IMR-90 (cell line): ENCODE measurements at regions of chr9 and their contacts with region 1.

Region 1: GRCh38 chr9:33320568-33321261 is 30.4 kb downstream of the NFX1 start:
- DNase-seq: peak; percentile 98
- ATAC-seq: peak; percentile 82
- H3K4me3 ChIP-seq: no peak overlapping the region
- H3K27ac ChIP-seq: peak overlapping the region; percentile 100
- H3K4me1 ChIP-seq: peaks cover 24% of the 10 kb centered on the region
- H3K27me3 ChIP-seq: no peaks in the 10 kb centered on the region
- CTCF ChIP-seq: no peak
- POLR2A ChIP-seq: 0 out of 2 replicates have a peak, but pooled peaks have one; percentile 12
- RAD21 ChIP-seq: no peak

Region 2: GRCh38 chr9:32456564-32456963 is 864.2 kb before region 1 on chr9:
- CTCF ChIA-PET with region 1: no interaction called
- POLR2A ChIA-PET with region 1: no interaction called
- dilution Hi-C with region 1: no loop called
- in situ Hi-C with region 1: no loop called
- intact Hi-C with region 1: no loop called
- DNase-seq: no peak
- ATAC-seq: peak; percentile 47
- H3K4me3 ChIP-seq: no peak overlapping the region
- H3K27ac ChIP-seq: no peak overlapping the region
- H3K4me1 ChIP-seq: no peaks in the 10 kb centered on the region
- H3K27me3 ChIP-seq: no peaks in the 10 kb centered on the region
- CTCF ChIP-seq: no peak
- POLR2A ChIP-seq: no peak
- RAD21 ChIP-seq: no peak

Region 3: DNA sequence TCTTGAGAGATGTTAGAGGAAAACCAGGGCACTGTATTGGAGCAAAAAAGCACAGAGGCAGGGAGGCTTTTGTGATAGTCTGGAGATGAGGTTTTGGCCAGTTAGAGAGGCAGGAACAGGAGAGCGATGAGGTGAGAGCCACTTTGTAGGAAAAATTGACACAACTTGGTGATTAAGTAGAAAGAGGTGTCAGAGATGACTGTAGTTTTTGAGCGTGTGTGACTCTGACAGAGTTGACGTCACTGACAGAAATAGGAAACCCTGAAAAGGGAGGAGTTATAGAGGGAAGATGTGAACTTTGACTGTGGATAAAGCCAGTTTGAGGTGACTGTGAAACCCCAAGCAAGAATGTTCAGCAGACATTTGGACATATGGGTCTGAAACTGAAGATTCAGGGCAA is 14.7 kb before region 1 on chr9:
- CTCF ChIA-PET with region 1: interaction called, 5 read pairs
- POLR2A ChIA-PET with region 1: interaction called, 13 read pairs
- dilution Hi-C with region 1: no loop called
- in situ Hi-C with region 1: no loop called
- intact Hi-C with region 1: no loop called
- DNase-seq: peak; percentile 28
- ATAC-seq: no peak
- H3K4me3 ChIP-seq: no peak overlapping the region
- H3K27ac ChIP-seq: no peak overlapping the region
- H3K4me1 ChIP-seq: peaks cover 4% of the 10 kb centered on the region; the same call in 1 of the 2 replicates
- H3K27me3 ChIP-seq: no peaks in the 10 kb centered on the region
- CTCF ChIP-seq: no peak
- POLR2A ChIP-seq: no peak
- RAD21 ChIP-seq: no peak

Region 4: DNA sequence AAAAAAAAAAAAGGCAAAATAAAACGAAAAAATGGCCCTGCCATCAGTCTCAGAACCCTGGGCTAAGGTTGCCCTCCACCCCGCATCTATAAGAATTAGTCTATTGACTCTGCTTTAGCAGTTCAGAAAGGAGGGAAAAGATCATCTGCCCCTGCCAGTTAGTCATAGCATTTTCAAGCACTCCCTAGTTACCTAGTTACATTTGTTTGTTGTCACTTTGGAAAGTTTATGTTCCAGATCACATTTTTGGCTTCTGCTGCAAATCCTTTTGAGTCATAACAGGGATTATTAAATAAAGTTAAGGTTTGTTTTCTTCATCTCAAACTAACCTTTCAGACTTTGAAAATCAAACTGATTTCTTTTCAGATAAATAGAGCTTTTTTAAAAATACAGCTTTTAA is 29.6 kb after region 1 on chr9:
- CTCF ChIA-PET with region 1: no interaction called
- POLR2A ChIA-PET with region 1: no interaction called
- dilution Hi-C with region 1: no loop called
- in situ Hi-C with region 1: no loop called
- intact Hi-C with region 1: loop called (anchors 5 kb)
- DNase-seq: peak; percentile 95
- ATAC-seq: peak; percentile 59
- H3K4me3 ChIP-seq: no peak overlapping the region
- H3K27ac ChIP-seq: peak overlapping the region; percentile 67; the same call in 1 of the 2 replicates
- H3K4me1 ChIP-seq: peaks cover 16% of the 10 kb centered on the region
- H3K27me3 ChIP-seq: no peaks in the 10 kb centered on the region
- CTCF ChIP-seq: no peak
- POLR2A ChIP-seq: no peak
- RAD21 ChIP-seq: no peak